K562 (cell line): ENCODE measurements at regions of chr5 and their contacts with region 1.

Region 1: DNA sequence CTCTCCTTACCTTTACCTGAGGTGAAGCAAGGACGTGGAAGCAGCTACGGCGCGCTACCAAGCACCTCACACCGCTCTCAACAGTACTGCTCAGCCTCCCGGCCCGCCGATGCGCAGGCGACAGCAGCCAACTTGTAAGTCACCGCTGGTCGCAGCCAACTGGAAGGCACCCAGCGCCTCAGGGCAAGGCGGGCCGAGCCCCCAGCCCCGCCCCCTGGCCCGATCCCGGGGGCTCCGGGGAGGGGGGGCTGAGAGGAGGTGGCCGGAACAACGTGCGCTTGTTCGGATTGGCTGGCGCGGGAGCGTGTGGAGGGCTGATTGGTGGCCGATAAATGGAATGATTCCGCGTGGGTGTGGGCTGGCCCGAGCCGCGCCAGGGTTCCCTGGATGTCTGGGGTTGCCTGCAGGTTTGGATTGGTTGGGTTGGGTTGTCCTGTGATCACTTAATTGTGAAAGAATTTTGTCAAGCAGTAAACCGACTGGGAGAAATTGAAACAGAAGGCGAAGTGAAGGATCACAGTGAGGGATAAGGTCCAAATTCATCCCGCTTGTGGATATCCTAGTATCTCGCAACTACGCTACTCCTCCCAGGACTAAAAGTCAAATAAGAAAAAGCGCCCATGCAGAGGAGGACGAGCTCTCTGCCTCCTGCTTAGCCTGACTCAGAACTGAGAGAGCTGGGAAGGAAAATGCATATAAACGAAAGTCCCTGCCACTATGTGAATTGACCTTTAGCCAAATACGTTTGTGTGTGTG is at the start of gene STARD4:
- DNase-seq: peak; percentile 97
- ATAC-seq: peak; percentile 95
- H3K4me3 ChIP-seq: peak within 1 kb of the TSS; percentile 82
- H3K27ac ChIP-seq: peak within 1 kb of the TSS; percentile 93
- H3K4me1 ChIP-seq: peaks cover 5 to 29% of the 10 kb centered on the region in 2 experiments; a peak in 4 of 5 replicates
- H3K27me3 ChIP-seq: no peaks in the 10 kb centered on the region
- CTCF ChIP-seq: peak in 1 of 3 experiments; percentile 1; a peak in 1 of 6 replicates
- EP300 ChIP-seq: peak; percentile 58; the same call in 1 of the 2 replicates
- POLR2A ChIP-seq: peak; percentile 96
- RAD21 ChIP-seq: 0 out of 4 replicates have a peak, but pooled peaks of 1 of the 2 experiments have one; percentile 5
- polyA plus RNA-seq, gene STARD4: 28.4 to 33.3 TPM

Region 2: GRCh38 chr5:109703829-109704228 is 1808.7 kb before region 1 on chr5:
- CTCF ChIA-PET with region 1: no interaction called
- POLR2A ChIA-PET with region 1: no interaction called
- in situ Hi-C with region 1: no loop called
- intact Hi-C with region 1: loop called (anchors 5 kb)
- DNase-seq: peak; percentile 82 to 91 (median 84)
- ATAC-seq: peak; percentile 87
- H3K4me3 ChIP-seq: no peak overlapping the region
- H3K27ac ChIP-seq: peak overlapping the region; percentile 68
- H3K4me1 ChIP-seq: peaks cover 20 to 70% of the 10 kb centered on the region in 2 experiments
- H3K27me3 ChIP-seq: no peaks in the 10 kb centered on the region
- CTCF ChIP-seq: no peak
- EP300 ChIP-seq: peak; percentile 92
- POLR2A ChIP-seq: no peak
- RAD21 ChIP-seq: no peak

Region 3: GRCh38 chr5:111194925-111195324 is 317.6 kb before region 1 on chr5:
- CTCF ChIA-PET with region 1: no interaction called
- POLR2A ChIA-PET with region 1: no interaction called
- in situ Hi-C with region 1: no loop called
- intact Hi-C with region 1: no loop called
- DNase-seq: no peak
- ATAC-seq: no peak
- H3K4me3 ChIP-seq: no peak overlapping the region
- H3K27ac ChIP-seq: no peak overlapping the region
- H3K4me1 ChIP-seq: no peaks in the 10 kb centered on the region
- H3K27me3 ChIP-seq: no peaks in the 10 kb centered on the region
- CTCF ChIP-seq: no peak
- EP300 ChIP-seq: no peak
- POLR2A ChIP-seq: no peak
- RAD21 ChIP-seq: no peak

Region 4: GRCh38 chr5:111530298-111530740 is 17.8 kb after region 1 on chr5:
- CTCF ChIA-PET with region 1: no interaction called
- POLR2A ChIA-PET with region 1: interaction called, 3 read pairs
- in situ Hi-C with region 1: no loop called
- intact Hi-C with region 1: loop called (anchors 2 kb)
- DNase-seq: peak; percentile 60 to 91 (median 74)
- ATAC-seq: peak; percentile 99
- H3K4me3 ChIP-seq: no peak overlapping the region
- H3K27ac ChIP-seq: peak overlapping the region; percentile 72
- H3K4me1 ChIP-seq: peaks cover 3 to 4% of the 10 kb centered on the region in 2 experiments; a peak in 2 of 5 replicates
- H3K27me3 ChIP-seq: no peaks in the 10 kb centered on the region
- CTCF ChIP-seq: no peak
- EP300 ChIP-seq: peak; percentile 60; the same call in 1 of the 2 replicates
- POLR2A ChIP-seq: peak; percentile 68
- RAD21 ChIP-seq: no peak

Region 5: DNA sequence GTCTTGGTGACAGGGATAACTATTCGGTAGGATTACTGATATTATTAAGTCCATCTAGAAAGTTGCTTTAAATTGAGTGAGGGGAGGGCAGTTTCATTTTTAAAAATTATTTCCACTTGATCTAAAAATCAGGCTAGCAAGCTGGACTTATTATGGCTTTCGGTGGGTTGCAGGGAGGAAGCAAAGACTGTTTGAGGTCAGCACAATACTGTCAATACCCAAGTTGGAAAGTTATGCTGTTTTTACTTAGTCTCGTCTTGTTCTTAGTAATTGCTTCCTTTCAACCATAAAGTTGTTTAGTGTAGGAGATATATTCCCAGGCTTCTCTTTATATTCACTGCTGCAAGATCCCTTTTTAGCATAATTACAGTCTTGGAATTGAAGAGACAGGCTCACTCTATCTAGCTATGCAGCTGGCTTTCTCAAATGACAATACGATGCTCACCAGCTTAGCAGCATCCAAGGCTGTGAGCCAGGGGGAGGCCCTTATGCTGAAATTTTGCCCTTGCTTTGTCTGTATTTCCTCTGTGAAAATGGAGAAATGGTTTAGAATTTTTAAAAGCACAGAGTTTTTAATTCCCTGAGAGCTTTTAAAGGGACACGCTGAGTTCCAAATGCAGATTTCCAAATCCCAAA is 1156.9 kb after region 1 on chr5:
- CTCF ChIA-PET with region 1: no interaction called
- POLR2A ChIA-PET with region 1: no interaction called
- in situ Hi-C with region 1: no loop called
- intact Hi-C with region 1: no loop called
- DNase-seq: no peak
- ATAC-seq: no peak; the same call in 2 of the 3 replicates
- H3K4me3 ChIP-seq: no peak overlapping the region
- H3K27ac ChIP-seq: no peak overlapping the region
- H3K4me1 ChIP-seq: no peaks in the 10 kb centered on the region
- H3K27me3 ChIP-seq: peaks cover 0 to 7% of the 10 kb centered on the region in 2 experiments; a peak in 4 of 5 replicates
- CTCF ChIP-seq: no peak
- EP300 ChIP-seq: no peak
- POLR2A ChIP-seq: no peak
- RAD21 ChIP-seq: no peak